Endothelial cell of umbilical vein (primary cell): ENCODE measurements at regions of chr18 and their contacts with region 1.

Region 1: DNA sequence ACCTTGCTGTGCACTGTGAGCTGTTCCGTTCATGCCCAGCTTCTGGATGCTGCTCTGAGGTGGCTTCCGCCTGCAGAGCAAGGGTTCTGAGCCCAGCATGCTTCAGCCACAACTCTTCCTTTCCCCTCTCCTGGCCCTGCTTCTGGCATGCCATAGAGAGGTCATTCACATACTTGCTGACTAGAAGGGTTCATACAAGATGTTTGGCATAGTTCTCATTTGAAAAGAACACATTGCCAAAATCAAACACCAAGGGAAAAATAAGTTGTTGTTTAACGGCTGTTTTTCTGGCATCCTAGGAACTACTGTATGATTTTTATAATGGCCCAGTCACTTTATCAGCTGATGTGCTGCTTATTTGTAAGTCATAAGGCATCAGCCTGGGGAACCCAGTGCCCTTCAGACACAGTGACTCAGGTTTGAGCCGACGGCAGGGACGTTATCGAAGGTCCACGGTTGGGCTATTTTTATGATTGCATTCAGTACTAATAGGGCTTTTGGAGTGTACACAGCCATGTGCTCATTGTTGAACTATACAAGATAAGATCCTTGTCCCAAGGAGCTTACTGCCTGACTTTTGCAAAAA is 53.9 kb upstream of the CTAGE1 start:
- DNase-seq: peak; percentile 84
- H3K4me3 ChIP-seq: no peak overlapping the region
- H3K27ac ChIP-seq: peak overlapping the region; percentile 97
- H3K4me1 ChIP-seq: peaks cover 54% of the 10 kb centered on the region
- H3K27me3 ChIP-seq: no peaks in the 10 kb centered on the region
- CTCF ChIP-seq: no peak
- POLR2A ChIP-seq: peak; percentile 19

Region 2: DNA sequence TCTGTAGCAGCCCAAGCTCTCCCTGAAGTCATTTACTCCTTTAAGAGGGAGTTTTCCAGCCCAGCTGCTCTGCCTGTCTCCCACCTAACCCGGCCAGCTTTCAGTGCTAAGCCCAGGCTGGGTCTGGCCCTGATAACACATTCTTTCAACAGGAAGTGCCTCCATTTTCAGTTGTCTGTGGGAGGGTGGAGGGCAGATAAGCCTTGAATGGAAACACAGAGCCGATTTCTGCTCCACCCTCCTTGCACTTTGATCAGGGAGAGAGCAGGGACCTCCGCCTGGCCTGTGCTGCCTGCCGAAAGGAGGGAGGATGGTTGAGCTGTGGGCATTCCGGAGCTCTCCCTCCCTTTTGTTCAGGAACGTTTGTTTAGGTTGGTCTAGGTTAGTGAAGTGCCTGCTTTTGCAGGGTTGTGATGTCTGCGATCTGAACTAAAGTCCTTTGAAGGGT is 277.5 kb before region 1 on chr18:
- CTCF ChIA-PET with region 1: no interaction called
- POLR2A ChIA-PET with region 1: no interaction called
- dilution Hi-C with region 1: no loop called
- intact Hi-C with region 1: loop called (anchors 1 kb)
- DNase-seq: peak; percentile 79
- H3K4me3 ChIP-seq: no peak overlapping the region
- H3K27ac ChIP-seq: peak overlapping the region; percentile 83
- H3K4me1 ChIP-seq: peaks cover 62% of the 10 kb centered on the region
- H3K27me3 ChIP-seq: no peaks in the 10 kb centered on the region
- CTCF ChIP-seq: no peak
- POLR2A ChIP-seq: no peak

Region 3: GRCh38 chr18:22348521-22349316 is 122.9 kb before region 1 on chr18:
- CTCF ChIA-PET with region 1: interaction called, 3 read pairs
- POLR2A ChIA-PET with region 1: no interaction called
- dilution Hi-C with region 1: no loop called
- intact Hi-C with region 1: loop called (anchors 10 kb)
- DNase-seq: peak; percentile 56
- H3K4me3 ChIP-seq: peak overlapping the region in 2 of 3 experiments; percentile 33 to 35
- H3K27ac ChIP-seq: peak overlapping the region; percentile 67
- H3K4me1 ChIP-seq: peaks cover 56% of the 10 kb centered on the region
- H3K27me3 ChIP-seq: no peaks in the 10 kb centered on the region
- CTCF ChIP-seq: no peak
- POLR2A ChIP-seq: no peak

Region 4: DNA sequence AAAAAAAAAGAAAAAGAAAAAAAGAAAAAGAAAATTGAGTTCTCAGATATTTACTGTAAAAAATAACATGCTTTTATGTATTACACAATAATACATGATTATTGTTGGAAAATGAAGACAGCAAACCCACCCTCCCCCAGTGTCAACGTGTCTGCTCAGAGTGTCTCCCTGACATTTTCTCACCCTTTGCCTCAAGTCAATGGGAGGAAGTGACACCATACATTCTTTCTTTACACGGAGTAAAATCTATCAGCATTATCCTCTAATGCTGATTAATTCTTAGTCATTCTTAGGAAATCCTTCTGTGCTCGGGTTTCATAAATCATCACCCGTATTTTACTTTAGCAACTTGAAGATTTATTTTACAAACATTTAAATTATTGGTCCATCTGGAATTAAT is 85.9 kb before region 1 on chr18:
- CTCF ChIA-PET with region 1: no interaction called
- POLR2A ChIA-PET with region 1: no interaction called
- dilution Hi-C with region 1: no loop called
- intact Hi-C with region 1: loop called (anchors 1 kb)
- DNase-seq: peak; percentile 93
- H3K4me3 ChIP-seq: peak overlapping the region in 1 of 3 experiments; percentile 18
- H3K27ac ChIP-seq: peak overlapping the region; percentile 84
- H3K4me1 ChIP-seq: peaks cover 14% of the 10 kb centered on the region
- H3K27me3 ChIP-seq: no peaks in the 10 kb centered on the region
- CTCF ChIP-seq: no peak
- POLR2A ChIP-seq: no peak

Region 5: DNA sequence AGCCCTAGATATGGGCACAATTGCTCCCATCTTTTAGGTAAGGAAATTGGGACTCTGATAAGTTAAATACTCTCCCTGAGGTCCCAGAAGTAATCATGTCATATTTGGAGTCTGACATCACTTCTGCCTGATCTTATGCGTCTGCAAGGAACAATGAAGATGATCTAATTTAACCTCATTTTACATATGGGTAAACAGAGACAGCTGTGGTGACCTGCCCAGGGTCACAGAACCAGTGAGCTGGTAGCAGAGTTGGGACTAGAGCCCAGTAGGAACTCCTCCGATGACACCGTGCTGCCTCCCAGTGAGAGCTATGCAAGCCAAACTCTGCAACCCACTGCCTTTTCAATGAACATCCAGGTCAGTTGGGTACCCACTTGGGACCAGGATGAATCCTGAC is 71.7 kb before region 1 on chr18:
- CTCF ChIA-PET with region 1: interaction called, 4 read pairs
- POLR2A ChIA-PET with region 1: no interaction called
- dilution Hi-C with region 1: no loop called
- intact Hi-C with region 1: loop called (anchors 1 kb)
- DNase-seq: peak; percentile 69
- H3K4me3 ChIP-seq: no peak overlapping the region
- H3K27ac ChIP-seq: peak overlapping the region; percentile 84
- H3K4me1 ChIP-seq: peaks cover 24% of the 10 kb centered on the region
- H3K27me3 ChIP-seq: no peaks in the 10 kb centered on the region
- CTCF ChIP-seq: no peak
- POLR2A ChIP-seq: no peak

Region 6: GRCh38 chr18:22494771-22495170 is 23.1 kb after region 1 on chr18:
- CTCF ChIA-PET with region 1: interaction called, 3 read pairs
- POLR2A ChIA-PET with region 1: no interaction called
- dilution Hi-C with region 1: no loop called
- intact Hi-C with region 1: loop called (anchors 2 kb)
- DNase-seq: peak; percentile 70
- H3K4me3 ChIP-seq: no peak overlapping the region
- H3K27ac ChIP-seq: peak overlapping the region; percentile 23
- H3K4me1 ChIP-seq: peaks cover 9% of the 10 kb centered on the region
- H3K27me3 ChIP-seq: no peaks in the 10 kb centered on the region
- CTCF ChIP-seq: no peak
- POLR2A ChIP-seq: no peak

Region 7: GRCh38 chr18:22667616-22668422 is 196.2 kb after region 1 on chr18:
- CTCF ChIA-PET with region 1: no interaction called
- POLR2A ChIA-PET with region 1: no interaction called
- dilution Hi-C with region 1: no loop called
- intact Hi-C with region 1: loop called (anchors 1 kb)
- DNase-seq: peak; percentile 96
- H3K4me3 ChIP-seq: no peak overlapping the region
- H3K27ac ChIP-seq: peak overlapping the region; percentile 79
- H3K4me1 ChIP-seq: peaks cover 37% of the 10 kb centered on the region
- H3K27me3 ChIP-seq: no peaks in the 10 kb centered on the region
- CTCF ChIP-seq: no peak
- POLR2A ChIP-seq: peak; percentile 49

Region 8: GRCh38 chr18:23183411-23184155 is 711.9 kb after region 1 on chr18:
- CTCF ChIA-PET with region 1: no interaction called
- POLR2A ChIA-PET with region 1: no interaction called
- dilution Hi-C with region 1: no loop called
- intact Hi-C with region 1: no loop called
- DNase-seq: no peak
- H3K4me3 ChIP-seq: no peak overlapping the region
- H3K27ac ChIP-seq: no peak overlapping the region
- H3K4me1 ChIP-seq: peaks cover 23% of the 10 kb centered on the region
- H3K27me3 ChIP-seq: no peaks in the 10 kb centered on the region
- CTCF ChIP-seq: no peak
- POLR2A ChIP-seq: no peak